ENCODE measurements at regions of chr1 and their contacts with region 1.

Region 1: GRCh38 chr1:44631647-44632539 is 42.4 kb downstream of the TMEM53 start:
- DNase-seq: peak; percentile 65
- H3K4me3 ChIP-seq: peak overlapping the region; percentile 72
- H3K27ac ChIP-seq: peak overlapping the region; percentile 91
- H3K27me3 ChIP-seq: no peaks in the 10 kb centered on the region
- CTCF ChIP-seq: no peak

Region 2: DNA sequence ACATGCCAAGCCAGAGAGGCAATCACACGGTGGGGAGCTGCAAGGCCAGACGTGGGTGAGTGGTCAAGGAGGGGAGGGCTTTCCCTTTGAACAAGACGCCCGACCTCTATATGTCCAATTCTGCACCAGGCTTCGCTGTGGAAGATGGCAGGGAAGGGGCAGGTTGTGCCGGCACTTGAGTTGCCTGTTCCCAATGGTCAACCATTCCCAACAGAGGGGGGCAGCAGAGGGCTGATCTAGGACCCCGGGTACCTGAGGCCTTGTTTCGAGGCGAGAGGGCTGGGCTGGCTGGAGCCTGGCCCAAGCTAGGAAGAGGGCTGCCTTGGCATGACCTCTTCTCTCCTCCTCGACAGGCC is 22.5 kb before region 1 on chr1:
- CTCF ChIA-PET with region 1: interaction called, 14 read pairs
- POLR2A ChIA-PET with region 1: interaction called, 5 read pairs
- DNase-seq: no peak
- H3K4me3 ChIP-seq: no peak overlapping the region
- H3K27ac ChIP-seq: no peak overlapping the region
- H3K27me3 ChIP-seq: peaks cover 20% of the 10 kb centered on the region
- CTCF ChIP-seq: peak; percentile 74

Region 3: GRCh38 chr1:44616991-44617702 is 14.7 kb before region 1 on chr1:
- CTCF ChIA-PET with region 1: interaction called, 4 read pairs
- POLR2A ChIA-PET with region 1: interaction called, 12 read pairs
- DNase-seq: no peak
- H3K4me3 ChIP-seq: peak overlapping the region; percentile 42
- H3K27ac ChIP-seq: no peak overlapping the region
- H3K27me3 ChIP-seq: peaks cover 15% of the 10 kb centered on the region
- CTCF ChIP-seq: no peak

Region 4: GRCh38 chr1:44645476-44646244 is 13.8 kb after region 1 on chr1:
- CTCF ChIA-PET with region 1: interaction called, 43 read pairs
- POLR2A ChIA-PET with region 1: interaction called, 30 read pairs
- DNase-seq: no peak
- H3K4me3 ChIP-seq: no peak overlapping the region; the same call in 1 of the 2 replicates
- H3K27ac ChIP-seq: peak overlapping the region; percentile 90
- H3K27me3 ChIP-seq: no peaks in the 10 kb centered on the region
- CTCF ChIP-seq: no peak

Measured in AG04450 (cell line).